ENCODE measurements at regions of chr20 and their contacts with region 1.

Region 1: DNA sequence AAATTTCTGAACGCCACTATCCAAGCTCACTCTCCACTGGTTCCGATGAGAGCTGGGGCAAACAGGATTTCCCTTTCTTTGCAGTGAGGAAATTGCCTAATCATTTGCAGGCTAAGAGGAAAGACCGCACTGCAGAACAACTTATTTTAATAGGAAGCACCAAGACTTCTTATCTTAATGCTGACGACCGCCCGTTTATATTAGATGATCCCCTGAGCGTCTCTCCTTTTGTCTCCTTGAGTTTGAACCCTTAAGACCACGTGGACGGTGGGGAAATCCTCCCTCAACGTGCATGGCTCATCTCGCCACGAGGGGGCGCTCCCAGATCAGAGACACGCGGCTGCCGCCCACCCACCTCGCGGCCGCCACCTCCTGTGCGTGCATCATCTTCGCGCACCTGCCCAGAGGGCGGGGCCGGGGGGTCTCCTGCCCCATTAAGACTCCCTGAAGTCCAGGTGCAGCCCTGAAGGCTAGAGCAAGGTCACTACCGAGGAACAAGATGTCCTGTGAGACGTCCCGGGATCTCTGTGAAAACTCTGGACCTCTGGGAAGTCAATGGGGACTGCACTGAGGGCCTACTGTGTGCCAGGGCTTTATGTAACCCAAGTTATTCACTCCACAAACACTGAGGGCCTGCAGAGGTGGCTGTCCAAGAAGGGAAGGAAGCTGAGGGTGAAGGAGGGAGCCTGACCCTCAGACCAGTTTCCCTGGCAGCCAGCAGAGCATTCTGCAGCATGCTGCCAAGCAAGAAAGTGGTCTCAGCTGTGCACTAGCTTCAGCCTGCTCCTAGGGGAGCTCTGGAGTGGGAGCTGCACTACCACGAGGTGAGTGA is 28.1 kb downstream of the PDYN start:
- DNase-seq: peak; percentile 51 to 88 (median 88)
- H3K4me3 ChIP-seq: peak overlapping the region; percentile 3 to 67 (median 29)
- H3K4me3 Mint-ChIP-seq: peak overlapping the region; percentile 68 to 86
- H3K27ac ChIP-seq: peak overlapping the region; percentile 81 to 83
- H3K27ac Mint-ChIP-seq: peak overlapping the region; percentile 90 to 96 (median 95)
- H3K4me1 ChIP-seq: peaks cover 33 to 39% of the 10 kb centered on the region in 2 donors
- H3K4me1 Mint-ChIP-seq: peaks cover 44% of the 10 kb centered on the region
- H3K27me3 ChIP-seq: no peaks in the 10 kb centered on the region
- H3K27me3 Mint-ChIP-seq: peaks cover 0 to 7% (median 3%) of the 10 kb centered on the region in 3 donors
- CTCF ChIP-seq: peak; percentile 94

Region 2: DNA sequence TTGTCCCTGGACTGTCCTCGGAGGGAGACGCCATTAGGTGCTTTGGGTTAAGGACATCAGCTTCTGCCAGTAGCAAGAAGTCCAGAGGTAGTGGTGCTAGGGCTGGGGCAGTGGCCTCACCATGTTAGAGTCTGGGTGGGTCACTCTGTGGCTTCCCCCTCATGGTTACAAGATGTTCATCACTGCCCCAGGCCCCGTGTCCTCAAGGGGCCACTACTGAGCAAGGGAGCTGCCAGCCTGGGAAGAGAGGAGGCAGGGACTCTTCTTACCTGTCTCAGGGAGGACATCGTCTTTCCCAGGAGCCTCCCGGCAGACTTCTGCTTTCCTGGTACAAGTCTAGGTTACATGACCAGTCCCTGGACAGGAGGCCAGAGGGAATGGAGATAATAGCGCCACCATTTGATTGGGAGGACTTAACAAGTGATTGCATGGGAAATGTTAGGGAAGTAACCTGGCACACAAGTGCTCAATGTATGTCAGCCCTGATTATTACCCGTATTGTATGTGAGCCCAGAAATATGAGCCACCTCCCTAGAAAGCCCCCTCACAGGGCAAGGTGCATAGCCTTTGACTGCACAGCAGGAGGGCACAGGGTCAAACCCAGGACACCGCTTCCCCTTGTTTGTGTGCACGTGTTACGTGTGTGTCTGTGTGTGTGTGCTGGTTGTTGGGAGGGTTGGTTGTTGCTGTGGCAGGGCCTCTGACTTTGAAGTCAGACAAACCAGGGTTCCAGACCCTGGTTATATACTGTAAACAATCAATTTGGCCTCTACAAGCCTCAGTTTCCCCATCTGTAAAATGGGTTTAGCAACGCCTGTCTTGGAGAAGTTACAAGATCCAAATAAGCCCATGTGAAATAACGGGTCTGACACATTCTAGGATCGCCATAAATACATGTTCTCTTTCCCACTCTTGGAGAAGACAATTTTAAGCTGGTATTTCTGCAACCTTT is 40.5 kb before region 1 on chr20:
- intact Hi-C with region 1: loop called (anchors 5 kb)
- DNase-seq: peak in 1 of 3 donors; percentile 41
- H3K4me3 ChIP-seq: no peak overlapping the region
- H3K4me3 Mint-ChIP-seq: no peak overlapping the region
- H3K27ac ChIP-seq: peak overlapping the region in 1 of 2 donors; percentile 23
- H3K27ac Mint-ChIP-seq: peak overlapping the region in 3 of 7 donors; percentile 57 to 60 (median 58)
- H3K4me1 ChIP-seq: peaks cover 4 to 12% of the 10 kb centered on the region in 2 donors
- H3K4me1 Mint-ChIP-seq: peaks cover 13% of the 10 kb centered on the region
- H3K27me3 ChIP-seq: no peaks in the 10 kb centered on the region
- H3K27me3 Mint-ChIP-seq: peaks cover 0 to 2% (median 2%) of the 10 kb centered on the region in 3 donors
- CTCF ChIP-seq: no peak

Region 3: GRCh38 chr20:1934721-1935573 is 30.8 kb before region 1 on chr20:
- intact Hi-C with region 1: loop called in 1 of 2 experiments (anchors 5 kb)
- DNase-seq: peak; percentile 40 to 90 (median 73)
- H3K4me3 ChIP-seq: no peak overlapping the region
- H3K4me3 Mint-ChIP-seq: peak overlapping the region in 1 of 2 donors; percentile 37
- H3K27ac ChIP-seq: peak overlapping the region; percentile 6 to 59
- H3K27ac Mint-ChIP-seq: peak overlapping the region; percentile 76 to 92 (median 81)
- H3K4me1 ChIP-seq: peaks cover 44 to 65% of the 10 kb centered on the region in 2 donors
- H3K4me1 Mint-ChIP-seq: peaks cover 82% of the 10 kb centered on the region
- H3K27me3 ChIP-seq: no peaks in the 10 kb centered on the region
- H3K27me3 Mint-ChIP-seq: peaks cover 1 to 5% (median 1%) of the 10 kb centered on the region in 3 donors
- CTCF ChIP-seq: no peak